Common myeloid progenitor, CD34-positive (primary cell): ENCODE measurements at regions of chr6 and their contacts with region 1.

Region 1: GRCh38 chr6:56595490-56596122 is 47.1 kb downstream of the DST start:
- DNase-seq: peak; percentile 52 to 72 (median 70)
- H3K4me3 ChIP-seq: no peak overlapping the region
- H3K27ac ChIP-seq: no peak overlapping the region
- H3K4me1 ChIP-seq: no peaks in the 10 kb centered on the region
- H3K27me3 ChIP-seq: no peaks in the 10 kb centered on the region

Region 2: GRCh38 chr6:56359201-56359899 is 236.3 kb before region 1 on chr6:
- CTCF ChIA-PET with region 1: interaction called, 54 read pairs
- POLR2A ChIA-PET with region 1: no interaction called
- DNase-seq: peak; percentile 75 to 89 (median 85)
- H3K4me3 ChIP-seq: no peak overlapping the region
- H3K27ac ChIP-seq: no peak overlapping the region
- H3K4me1 ChIP-seq: no peaks in the 10 kb centered on the region
- H3K27me3 ChIP-seq: no peaks in the 10 kb centered on the region

Region 3: DNA sequence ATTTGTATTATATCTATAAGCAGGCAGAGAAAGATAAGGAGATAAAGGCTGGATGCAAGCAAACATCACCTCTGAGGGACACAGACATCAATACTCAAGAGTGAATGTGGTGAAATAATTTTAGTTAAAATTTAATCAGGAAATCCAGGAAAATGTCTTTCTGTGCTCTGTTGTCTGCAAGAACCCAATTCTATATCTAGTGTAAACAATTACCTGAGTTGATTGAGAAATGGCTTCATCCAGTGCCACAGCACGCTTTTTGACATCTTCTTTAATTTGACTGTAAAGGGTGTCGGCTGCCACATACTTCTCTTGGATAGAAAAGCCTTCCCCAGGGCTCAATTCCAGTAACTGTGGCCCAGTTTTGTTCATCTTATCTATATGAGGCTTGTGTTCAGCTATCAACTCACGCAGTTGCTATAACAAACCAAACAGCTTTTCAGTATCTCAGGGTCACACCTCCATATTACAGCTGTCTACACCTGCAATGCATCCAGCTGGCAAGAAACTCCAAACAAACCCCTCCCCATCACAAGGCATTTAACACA is 84.5 kb before region 1 on chr6:
- CTCF ChIA-PET with region 1: no interaction called
- POLR2A ChIA-PET with region 1: no interaction called
- DNase-seq: no peak
- H3K4me3 ChIP-seq: no peak overlapping the region
- H3K27ac ChIP-seq: no peak overlapping the region
- H3K4me1 ChIP-seq: peaks cover 0 to 16% (median 0%) of the 10 kb centered on the region in 4 experiments
- H3K27me3 ChIP-seq: no peaks in the 10 kb centered on the region

Region 4: GRCh38 chr6:56581296-56581925 is 14.2 kb before region 1 on chr6:
- CTCF ChIA-PET with region 1: interaction called, 19 read pairs
- POLR2A ChIA-PET with region 1: no interaction called
- DNase-seq: no peak
- H3K4me3 ChIP-seq: no peak overlapping the region
- H3K27ac ChIP-seq: no peak overlapping the region
- H3K4me1 ChIP-seq: no peaks in the 10 kb centered on the region
- H3K27me3 ChIP-seq: no peaks in the 10 kb centered on the region

Region 5: DNA sequence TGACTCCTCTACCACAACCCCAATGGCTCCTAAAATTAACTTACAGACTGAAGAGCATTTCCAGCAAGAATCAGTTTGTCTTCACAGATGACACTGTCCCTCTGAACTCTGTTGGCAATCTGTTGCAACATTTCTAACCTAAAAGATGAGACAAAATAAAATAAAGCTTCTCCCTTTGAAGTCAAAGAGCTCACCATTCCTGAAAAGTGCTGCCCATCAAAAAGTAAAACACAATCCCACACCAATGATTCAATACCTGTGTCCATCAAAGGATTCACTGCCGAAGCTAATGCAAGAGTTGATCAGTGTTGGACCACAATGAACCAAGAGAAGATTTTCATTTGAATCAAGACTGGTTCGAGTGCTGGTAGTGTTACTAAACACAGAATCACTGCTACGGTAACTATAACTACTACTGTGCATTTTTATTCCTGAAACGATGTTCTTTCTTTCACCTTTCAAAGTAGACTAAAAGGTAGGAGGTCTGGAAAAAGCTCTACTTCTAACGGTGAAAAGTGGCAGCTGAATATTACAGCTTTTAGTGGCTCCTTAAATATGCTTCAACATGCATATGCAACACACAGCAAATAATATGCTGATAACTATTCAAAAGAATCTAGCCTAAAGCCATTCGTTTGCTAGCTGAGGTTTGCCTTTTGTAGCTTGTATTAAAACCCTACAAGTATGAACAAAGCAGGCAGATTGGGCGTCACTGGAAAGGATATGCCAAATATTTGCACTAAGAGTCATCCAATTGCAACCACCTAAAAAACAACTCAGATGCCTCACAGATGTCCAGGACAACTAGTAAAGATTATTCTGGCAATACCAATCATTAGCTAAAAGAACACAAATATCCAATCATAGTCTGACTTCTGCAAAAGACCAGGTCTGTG is 47.0 kb after region 1 on chr6 and contains the start of gene DST:
- CTCF ChIA-PET with region 1: no interaction called
- POLR2A ChIA-PET with region 1: no interaction called
- DNase-seq: no peak
- H3K4me3 ChIP-seq: no peak within 1 kb of the TSS
- H3K27ac ChIP-seq: no peak within 1 kb of the TSS
- H3K4me1 ChIP-seq: no peaks in the 10 kb centered on the region
- H3K27me3 ChIP-seq: no peaks in the 10 kb centered on the region